ENCODE measurements at regions of chr2 and their contacts with region 1.

Region 1: DNA sequence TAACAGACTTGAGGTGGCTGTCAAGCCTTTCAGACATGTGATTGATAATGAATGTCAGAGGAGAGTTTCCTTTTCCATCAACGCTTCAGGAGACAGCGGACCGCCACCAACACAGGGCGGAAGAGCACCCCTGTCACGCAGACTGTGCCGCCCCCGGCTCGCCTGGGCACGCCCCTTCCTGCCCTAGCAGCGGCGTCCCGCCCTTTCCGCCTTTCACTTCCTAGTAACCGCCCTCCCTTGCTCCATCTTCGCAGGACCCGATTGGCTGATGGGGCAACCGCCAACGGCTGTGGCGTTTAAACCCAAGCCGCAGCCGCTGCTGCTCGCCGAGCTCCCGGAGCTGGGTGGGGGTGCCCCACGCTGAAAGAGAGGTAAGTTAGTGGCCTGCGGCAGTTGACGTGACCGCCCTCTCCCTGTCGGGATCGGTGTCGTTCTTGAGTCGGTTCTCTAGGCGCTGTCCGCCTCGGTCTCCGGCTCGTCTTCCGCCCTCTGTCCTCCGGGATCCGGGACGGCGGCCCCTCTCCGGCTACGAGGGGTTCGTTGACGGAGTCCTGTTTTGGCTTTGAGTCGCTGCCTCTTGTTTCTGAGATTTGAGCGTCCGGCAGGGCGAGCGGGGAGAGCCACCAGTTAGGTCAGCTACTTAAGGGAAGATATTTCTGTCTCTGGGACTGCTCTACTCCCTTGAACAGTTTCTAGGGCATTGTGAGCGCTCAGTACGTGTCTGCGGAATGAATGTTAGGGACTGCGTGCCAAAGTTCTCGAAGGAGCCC is at the start of gene SGO2:
- DNase-seq: peak; percentile 89 to 91
- ATAC-seq: peak; percentile 99 to 100
- H3K4me3 ChIP-seq: peak within 1 kb of the TSS; percentile 72 to 92 (median 79)
- H3K27ac ChIP-seq: peak within 1 kb of the TSS; percentile 51 to 62 (median 58)
- H3K4me1 ChIP-seq: peaks cover 11 to 14% of the 10 kb centered on the region in 2 donors
- H3K27me3 ChIP-seq: no peaks in the 10 kb centered on the region
- CTCF ChIP-seq: no peak
- POLR2A ChIP-seq: peak; percentile 37 to 43
- total RNA-seq, gene SGO2: 0.61 to 2.6 (median 0.70) TPM

Region 2: GRCh38 chr2:199646439-199646838 is 879.6 kb before region 1 on chr2:
- in situ Hi-C with region 1: no loop called
- intact Hi-C with region 1: no loop called
- DNase-seq: no peak
- ATAC-seq: no peak
- H3K4me3 ChIP-seq: no peak overlapping the region
- H3K27ac ChIP-seq: no peak overlapping the region
- H3K4me1 ChIP-seq: no peaks in the 10 kb centered on the region
- H3K27me3 ChIP-seq: no peaks in the 10 kb centered on the region
- CTCF ChIP-seq: no peak
- POLR2A ChIP-seq: no peak

Region 3: GRCh38 chr2:200121931-200122330 is 404.1 kb before region 1 on chr2:
- in situ Hi-C with region 1: no loop called
- intact Hi-C with region 1: no loop called
- DNase-seq: no peak
- ATAC-seq: no peak
- H3K4me3 ChIP-seq: no peak overlapping the region
- H3K27ac ChIP-seq: no peak overlapping the region
- H3K4me1 ChIP-seq: no peaks in the 10 kb centered on the region
- H3K27me3 ChIP-seq: no peaks in the 10 kb centered on the region
- CTCF ChIP-seq: no peak
- POLR2A ChIP-seq: no peak

Region 4: GRCh38 chr2:200509612-200510433 is 16.2 kb before region 1 on chr2 and contains the start of gene KCTD18:
- in situ Hi-C with region 1: no loop called
- intact Hi-C with region 1: loop called (anchors 2 kb)
- DNase-seq: peak; percentile 76 to 86
- ATAC-seq: peak; percentile 96 to 97
- H3K4me3 ChIP-seq: peak within 1 kb of the TSS; percentile 71 to 89 (median 80)
- H3K27ac ChIP-seq: peak within 1 kb of the TSS; percentile 77 to 89 (median 81)
- H3K4me1 ChIP-seq: peaks cover 9 to 15% of the 10 kb centered on the region in 2 donors
- H3K27me3 ChIP-seq: peaks cover 0 to 2% (median 0%) of the 10 kb centered on the region in 3 donors
- CTCF ChIP-seq: peak; percentile 73 to 91 (median 77)
- POLR2A ChIP-seq: peak; percentile 88 to 93
- total RNA-seq, gene KCTD18: 16.6 to 20.1 (median 19.6) TPM

Region 5: DNA sequence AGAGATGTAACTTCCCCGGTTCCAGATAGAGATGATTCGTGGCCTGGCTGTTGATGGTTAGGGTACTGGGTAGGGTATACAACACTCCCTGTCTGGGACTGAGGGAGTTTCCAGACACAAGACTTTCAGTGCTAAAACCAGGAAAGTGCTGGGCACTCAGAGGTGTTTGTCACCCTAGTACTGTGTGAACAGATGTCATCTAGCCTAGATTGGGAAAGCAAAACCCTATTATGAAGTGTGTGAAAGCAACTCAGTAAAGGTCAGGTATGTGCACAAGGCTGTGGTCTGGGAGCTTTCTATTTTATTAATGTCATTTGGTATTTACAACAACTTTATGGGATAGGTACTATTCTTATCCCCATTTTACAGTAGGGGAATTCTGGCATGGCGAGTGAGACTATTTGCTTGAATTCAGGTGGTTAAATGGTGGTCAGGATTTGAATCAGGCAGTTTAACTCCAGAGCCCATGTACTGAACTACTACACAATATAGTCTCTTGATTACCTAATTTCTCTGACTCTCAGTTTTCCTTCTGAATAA is 288.3 kb after region 1 on chr2:
- in situ Hi-C with region 1: no loop called
- intact Hi-C with region 1: no loop called
- DNase-seq: peak; percentile 47 to 48
- ATAC-seq: peak; percentile 35 to 40
- H3K4me3 ChIP-seq: peak overlapping the region; percentile 77 to 98 (median 92)
- H3K27ac ChIP-seq: peak overlapping the region; percentile 95 to 99 (median 98)
- H3K4me1 ChIP-seq: peaks cover 31 to 34% of the 10 kb centered on the region in 2 donors
- H3K27me3 ChIP-seq: no peaks in the 10 kb centered on the region
- CTCF ChIP-seq: no peak
- POLR2A ChIP-seq: peak; percentile 47 to 69